Caco-2 (cell line): ENCODE measurements at regions of chr21 and their contacts with region 1.

Region 1: DNA sequence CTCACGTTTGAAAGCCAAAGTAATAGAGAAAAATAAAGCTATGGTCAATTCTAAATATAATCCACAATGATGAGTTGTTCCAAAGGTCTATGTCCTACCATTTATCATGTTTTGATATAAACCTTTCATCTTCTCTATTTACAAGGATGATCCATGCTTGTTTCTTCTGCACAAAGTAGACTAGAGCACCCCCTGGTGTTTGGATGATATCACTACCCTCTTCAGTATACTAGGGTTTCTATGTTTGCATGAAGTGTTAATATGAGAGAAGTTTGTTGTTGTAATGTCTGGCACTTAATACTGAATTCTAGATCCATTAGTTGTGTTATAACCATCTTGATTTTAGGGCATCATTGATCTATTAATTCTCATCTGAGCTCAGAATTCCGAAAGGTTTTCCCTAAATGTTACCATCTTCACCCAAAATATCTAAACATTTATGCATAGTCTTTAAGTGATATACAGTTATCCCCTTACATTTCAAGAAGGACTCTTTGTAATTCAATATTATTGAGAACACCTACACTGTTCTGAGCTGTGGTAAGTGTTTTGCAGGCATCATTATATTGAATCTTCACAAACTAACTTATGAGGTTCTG is 21.1 kb downstream of the CLDN8 start:
- DNase-seq: peak in 1 of 2 experiments; percentile 62
- H3K4me3 ChIP-seq: no peak overlapping the region
- H3K4me3 Mint-ChIP-seq: no peak overlapping the region
- H3K27ac Mint-ChIP-seq: no peak overlapping the region
- H3K4me1 ChIP-seq: no peaks in the 10 kb centered on the region
- H3K4me1 Mint-ChIP-seq: no peaks in the 10 kb centered on the region
- H3K27me3 ChIP-seq: no peaks in the 10 kb centered on the region
- H3K27me3 Mint-ChIP-seq: peaks cover 9% of the 10 kb centered on the region
- CTCF ChIP-seq: peak; percentile 59 to 64

Region 2: GRCh38 chr21:29606613-29607012 is 588.2 kb before region 1 on chr21:
- CTCF ChIA-PET with region 1: no interaction called
- POLR2A ChIA-PET with region 1: no interaction called
- intact Hi-C with region 1: loop called (anchors 5 kb)
- DNase-seq: no peak
- H3K4me3 ChIP-seq: no peak overlapping the region
- H3K4me3 Mint-ChIP-seq: no peak overlapping the region
- H3K27ac Mint-ChIP-seq: no peak overlapping the region
- H3K4me1 ChIP-seq: no peaks in the 10 kb centered on the region
- H3K4me1 Mint-ChIP-seq: no peaks in the 10 kb centered on the region
- H3K27me3 ChIP-seq: no peaks in the 10 kb centered on the region
- H3K27me3 Mint-ChIP-seq: no peaks in the 10 kb centered on the region
- CTCF ChIP-seq: no peak

Region 3: GRCh38 chr21:29943885-29944284 is 250.9 kb before region 1 on chr21:
- CTCF ChIA-PET with region 1: no interaction called
- POLR2A ChIA-PET with region 1: no interaction called
- intact Hi-C with region 1: loop called (anchors 1 kb)
- DNase-seq: peak in 1 of 2 experiments; percentile 5
- H3K4me3 ChIP-seq: no peak overlapping the region
- H3K4me3 Mint-ChIP-seq: peak overlapping the region; percentile 46
- H3K27ac Mint-ChIP-seq: no peak overlapping the region
- H3K4me1 ChIP-seq: no peaks in the 10 kb centered on the region; the same call in 1 of the 2 replicates
- H3K4me1 Mint-ChIP-seq: peaks cover 8% of the 10 kb centered on the region
- H3K27me3 ChIP-seq: no peaks in the 10 kb centered on the region
- H3K27me3 Mint-ChIP-seq: peaks cover 12% of the 10 kb centered on the region
- CTCF ChIP-seq: peak; percentile 28 to 45

Region 4: DNA sequence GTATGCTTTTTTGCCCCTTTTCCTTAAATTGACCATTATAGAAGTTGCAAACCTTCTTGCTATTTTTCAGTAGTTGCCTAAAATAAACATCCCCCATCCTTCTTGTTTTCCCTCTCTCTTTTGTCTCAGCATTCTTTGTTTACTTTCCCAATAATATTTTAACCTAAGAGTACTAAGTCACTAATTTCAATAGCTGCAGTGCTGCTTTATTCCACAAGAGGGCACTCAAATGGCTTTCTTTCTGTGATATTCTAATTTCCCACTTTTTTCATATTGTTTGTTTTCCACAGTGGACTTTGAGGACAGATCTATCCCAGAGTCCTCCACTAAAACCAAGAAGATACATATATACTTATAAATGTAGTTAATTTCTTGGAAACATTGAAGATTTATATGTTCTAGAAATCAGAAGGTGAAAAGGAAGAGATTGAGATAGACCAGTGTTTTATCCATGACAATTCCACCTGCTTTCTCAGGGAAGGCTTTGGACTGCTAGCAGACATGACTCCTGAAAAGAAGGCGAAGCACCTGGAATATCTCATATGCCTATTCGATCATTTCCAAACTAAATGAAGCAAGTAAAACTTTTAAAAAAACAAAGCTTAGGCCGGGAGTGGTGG is 150.2 kb before region 1 on chr21:
- CTCF ChIA-PET with region 1: interaction called, 3 read pairs
- POLR2A ChIA-PET with region 1: no interaction called
- intact Hi-C with region 1: loop called (anchors 1 kb)
- DNase-seq: peak in 1 of 2 experiments; percentile 29
- H3K4me3 ChIP-seq: no peak overlapping the region
- H3K4me3 Mint-ChIP-seq: no peak overlapping the region
- H3K27ac Mint-ChIP-seq: no peak overlapping the region
- H3K4me1 ChIP-seq: no peaks in the 10 kb centered on the region
- H3K4me1 Mint-ChIP-seq: no peaks in the 10 kb centered on the region
- H3K27me3 ChIP-seq: no peaks in the 10 kb centered on the region
- H3K27me3 Mint-ChIP-seq: peaks cover 2% of the 10 kb centered on the region
- CTCF ChIP-seq: peak; percentile 63 to 69

Region 5: DNA sequence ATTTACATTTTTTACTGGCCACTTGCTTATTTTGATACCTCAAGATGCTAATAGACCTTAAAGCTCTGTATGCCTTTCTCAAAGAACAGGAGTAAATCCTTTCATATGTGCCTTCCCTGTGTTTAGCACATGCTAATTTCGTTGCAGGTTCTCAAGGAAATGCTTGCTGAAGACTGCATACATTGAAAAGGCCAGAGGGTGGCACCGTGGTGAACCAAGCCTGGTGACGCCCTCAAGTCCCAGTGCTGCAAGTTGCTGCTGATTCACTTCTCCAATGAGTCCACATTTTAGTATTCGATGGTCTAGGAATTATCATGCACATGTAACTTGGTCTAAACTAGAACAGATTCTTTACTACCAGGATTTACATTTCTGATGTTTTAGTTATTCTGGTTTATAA is 122.3 kb before region 1 on chr21:
- CTCF ChIA-PET with region 1: no interaction called
- POLR2A ChIA-PET with region 1: no interaction called
- intact Hi-C with region 1: loop called (anchors 1 kb)
- DNase-seq: peak in 1 of 2 experiments; percentile 27
- H3K4me3 ChIP-seq: no peak overlapping the region
- H3K4me3 Mint-ChIP-seq: no peak overlapping the region
- H3K27ac Mint-ChIP-seq: no peak overlapping the region
- H3K4me1 ChIP-seq: no peaks in the 10 kb centered on the region
- H3K4me1 Mint-ChIP-seq: no peaks in the 10 kb centered on the region
- H3K27me3 ChIP-seq: no peaks in the 10 kb centered on the region
- H3K27me3 Mint-ChIP-seq: peaks cover 6% of the 10 kb centered on the region
- CTCF ChIP-seq: peak in 1 of 2 experiments; percentile 37

Region 6: DNA sequence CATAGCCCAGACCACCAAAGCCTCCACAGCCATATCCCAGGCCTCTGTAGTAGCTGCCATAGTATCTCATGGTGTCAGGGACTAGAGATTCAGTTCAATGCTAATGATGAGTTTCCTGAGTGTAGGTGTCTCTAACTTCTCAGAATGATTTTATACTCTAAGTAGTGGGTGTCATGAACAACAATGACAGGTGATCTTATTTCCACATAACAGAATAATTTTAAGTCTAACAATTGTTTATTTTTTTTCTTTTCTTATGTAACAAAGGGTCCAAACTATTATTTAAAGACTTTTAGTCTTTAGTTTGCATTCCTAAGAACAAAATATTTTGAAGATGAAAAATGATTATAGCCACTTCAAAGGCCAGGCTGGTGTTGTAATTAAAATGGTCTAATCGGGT is 347.0 kb after region 1 on chr21 and contains the start of gene KRTAP19-6:
- CTCF ChIA-PET with region 1: no interaction called
- POLR2A ChIA-PET with region 1: no interaction called
- intact Hi-C with region 1: no loop called
- DNase-seq: no peak
- H3K4me3 ChIP-seq: no peak within 1 kb of the TSS
- H3K4me3 Mint-ChIP-seq: no peak within 1 kb of the TSS
- H3K27ac Mint-ChIP-seq: no peak within 1 kb of the TSS
- H3K4me1 ChIP-seq: no peaks in the 10 kb centered on the region
- H3K4me1 Mint-ChIP-seq: no peaks in the 10 kb centered on the region
- H3K27me3 ChIP-seq: no peaks in the 10 kb centered on the region
- H3K27me3 Mint-ChIP-seq: peaks cover 7% of the 10 kb centered on the region
- CTCF ChIP-seq: no peak
- total RNA-seq, gene KRTAP19-6: not detected in 2 replicates